BJ (cell line): ENCODE measurements at regions of chr1 and their contacts with region 1.

Region 1: GRCh38 chr1:9867408-9868243 is 42.4 kb downstream of the CTNNBIP1 start:
- DNase-seq: no peak
- H3K4me3 ChIP-seq: no peak overlapping the region
- H3K27me3 ChIP-seq: no peaks in the 10 kb centered on the region
- CTCF ChIP-seq: peak; percentile 97

Region 2: DNA sequence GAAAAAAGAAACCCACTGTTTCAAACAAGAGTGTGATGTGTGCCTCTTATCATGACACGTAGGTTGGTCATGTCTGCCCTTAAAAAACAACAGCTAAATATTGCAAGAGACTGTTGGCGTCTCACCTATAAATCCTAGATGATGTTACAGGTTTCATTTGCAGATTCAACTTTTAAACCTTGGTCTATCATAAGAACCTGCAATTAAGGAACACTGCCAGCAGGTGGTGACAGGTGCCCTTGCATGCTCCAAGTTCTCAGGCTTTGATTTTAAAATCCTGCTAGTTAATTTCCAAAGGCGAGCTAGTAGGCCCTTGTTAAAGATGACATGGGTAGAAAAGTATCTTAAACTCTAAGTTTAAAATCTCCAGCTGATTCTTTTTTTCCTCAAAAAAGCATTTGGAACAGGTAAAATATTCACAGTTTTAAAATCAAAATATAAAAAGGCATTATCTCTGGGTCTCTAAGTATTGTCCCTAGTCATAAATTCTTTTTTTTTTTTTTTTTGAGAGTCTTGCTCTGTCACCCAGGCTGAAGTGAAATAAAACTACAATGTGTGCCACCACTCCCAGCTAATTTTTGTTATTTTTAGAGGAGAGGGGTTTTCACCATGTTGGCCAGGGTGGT is 83.0 kb before region 1 on chr1:
- CTCF ChIA-PET with region 1: interaction called, 22 read pairs
- POLR2A ChIA-PET with region 1: no interaction called
- DNase-seq: no peak
- H3K4me3 ChIP-seq: no peak overlapping the region
- H3K27me3 ChIP-seq: no peaks in the 10 kb centered on the region
- CTCF ChIP-seq: peak; percentile 66

Region 3: DNA sequence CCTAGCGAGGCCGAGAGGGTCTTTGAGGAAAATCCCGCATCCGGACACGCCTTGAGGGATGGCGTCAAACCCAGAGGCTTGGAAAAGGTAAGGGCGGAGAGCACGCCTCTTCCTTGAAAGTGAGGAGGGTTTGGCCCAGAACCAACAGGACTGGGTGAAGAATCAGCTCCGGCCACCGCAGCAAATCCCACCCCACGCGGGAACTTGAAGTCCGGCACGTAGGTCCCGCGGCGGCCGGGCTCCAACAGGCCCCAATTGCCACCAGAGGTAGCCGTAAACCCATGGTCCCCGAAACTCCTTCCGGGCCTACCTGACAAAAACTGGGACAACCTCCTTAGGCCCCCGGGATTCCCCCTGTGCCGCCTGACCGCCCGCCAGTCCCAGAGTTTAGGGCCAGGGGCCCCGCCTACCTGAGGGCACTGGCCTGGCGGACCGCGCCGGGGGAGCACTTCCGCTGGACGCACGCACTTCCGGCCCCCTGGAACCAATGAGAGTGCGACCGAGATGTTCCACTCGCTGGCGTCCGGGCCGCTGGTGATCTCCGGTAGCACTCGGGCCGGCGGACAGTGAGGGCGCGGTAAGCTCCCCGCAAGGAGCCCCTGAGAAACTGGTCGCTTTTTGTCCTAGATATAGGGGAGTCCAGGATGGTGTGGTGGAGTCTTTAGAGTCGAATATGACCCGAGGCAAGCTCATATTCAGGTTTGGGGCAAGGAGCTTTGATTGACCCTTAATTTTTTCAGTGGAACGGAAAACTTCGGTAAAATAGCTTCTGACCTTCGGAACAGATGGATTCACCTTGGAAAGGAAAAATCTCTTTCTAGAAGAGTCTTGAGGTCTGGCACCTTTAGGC is 75.5 kb after region 1 on chr1 and contains the starts of genes LZIC and NMNAT1:
- CTCF ChIA-PET with region 1: interaction called, 45 read pairs
- POLR2A ChIA-PET with region 1: no interaction called
- DNase-seq: peak; percentile 37
- H3K4me3 ChIP-seq: peak within 1 kb of the TSS; percentile 91
- H3K27me3 ChIP-seq: no peaks in the 10 kb centered on the region
- CTCF ChIP-seq: no peak
- polyA plus RNA-seq, gene LZIC: 9.1 and 19.4 TPM in 2 replicates
- polyA plus RNA-seq, gene NMNAT1: 9.8 and 12.4 TPM in 2 replicates

Region 4: DNA sequence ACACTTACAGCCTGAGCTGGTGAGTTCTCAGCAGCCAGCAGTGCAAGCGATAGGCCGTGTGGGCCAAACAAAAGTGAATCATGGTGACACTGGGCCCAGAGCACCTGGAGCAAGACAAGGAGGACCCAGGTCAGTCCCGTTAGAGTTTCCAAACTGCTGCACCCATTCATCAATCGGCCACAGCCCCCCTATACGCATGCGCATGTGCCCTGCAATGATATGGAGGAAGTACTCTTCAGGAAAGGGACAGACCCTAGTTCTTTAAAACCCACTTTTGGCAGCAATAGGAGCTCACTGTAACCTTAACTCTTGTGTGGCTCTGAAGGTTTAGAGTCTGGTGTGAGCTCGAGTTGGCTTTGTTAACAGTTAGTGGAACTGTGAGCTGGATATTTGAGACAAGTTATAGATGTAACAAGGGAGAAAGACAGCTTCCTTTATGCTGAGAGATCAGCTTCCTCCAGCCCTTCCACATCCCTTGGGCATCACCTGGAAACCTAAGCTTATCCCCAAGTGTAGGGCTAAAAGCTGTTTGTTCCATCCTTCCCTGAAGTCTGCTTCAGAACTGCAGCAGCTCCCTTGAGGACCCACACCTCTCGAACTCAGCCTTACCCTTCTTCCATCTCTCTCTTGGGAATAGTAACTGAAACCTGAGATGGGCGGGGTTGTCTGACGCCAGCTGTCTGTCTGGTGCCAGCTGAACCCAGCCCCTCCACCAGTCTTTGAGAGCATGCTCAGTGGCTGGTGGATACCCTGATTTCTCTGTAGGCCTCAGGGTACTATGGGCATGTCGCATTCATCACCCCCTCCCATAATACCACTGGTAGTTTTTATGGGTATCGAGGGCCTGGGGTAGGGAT is 93.3 kb after region 1 on chr1:
- CTCF ChIA-PET with region 1: no interaction called
- POLR2A ChIA-PET with region 1: no interaction called
- DNase-seq: no peak
- H3K4me3 ChIP-seq: no peak overlapping the region
- H3K27me3 ChIP-seq: no peaks in the 10 kb centered on the region
- CTCF ChIP-seq: no peak